A673 (cell line): ENCODE measurements at regions of chr1 and their contacts with region 1.

Region 1: DNA sequence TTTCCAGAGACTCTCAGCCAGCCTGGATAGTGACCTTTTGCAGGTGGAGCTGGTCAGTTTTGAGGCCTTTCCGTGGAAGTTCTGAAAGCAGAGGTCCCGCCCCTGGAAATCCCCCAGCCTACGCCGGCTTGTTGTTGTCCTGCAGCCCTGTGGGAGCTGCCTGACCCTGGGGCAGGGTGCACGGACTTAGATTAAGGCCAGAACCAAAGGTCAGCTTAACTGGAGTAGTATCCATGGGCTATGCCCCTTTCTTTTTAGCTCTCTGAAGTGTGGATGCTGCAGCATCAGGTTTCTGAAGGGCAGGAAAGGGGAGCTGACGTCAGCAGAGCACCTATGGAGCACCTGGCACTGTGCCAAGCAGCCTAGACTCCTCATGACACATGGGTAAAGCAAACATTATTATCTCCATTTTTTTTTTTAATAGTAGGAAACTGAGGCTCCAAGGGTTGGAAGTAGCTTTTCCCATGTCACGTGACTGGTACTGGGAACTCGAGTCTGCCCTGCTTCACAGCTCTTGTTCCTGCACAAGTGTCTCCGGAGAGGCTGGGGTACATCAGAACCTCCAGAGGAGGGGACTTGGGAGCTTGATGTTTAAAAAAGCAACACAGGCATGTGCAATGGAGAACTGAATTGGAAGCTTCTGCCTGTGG is 38.6 kb downstream of the IER5 start:
- DNase-seq: peak; percentile 57
- H3K4me3 ChIP-seq: no peak overlapping the region
- H3K27ac ChIP-seq: no peak overlapping the region
- H3K4me1 ChIP-seq: peaks cover 28% of the 10 kb centered on the region
- H3K27me3 ChIP-seq: no peaks in the 10 kb centered on the region
- CTCF ChIP-seq: no peak

Region 2: GRCh38 chr1:181105134-181106021 is 21.7 kb before region 1 on chr1:
- CTCF ChIA-PET with region 1: no interaction called
- POLR2A ChIA-PET with region 1: interaction called, 11 read pairs
- intact Hi-C with region 1: no loop called
- DNase-seq: peak; percentile 97
- H3K4me3 ChIP-seq: peak overlapping the region; percentile 70
- H3K27ac ChIP-seq: peak overlapping the region; percentile 93
- H3K4me1 ChIP-seq: peaks cover 59% of the 10 kb centered on the region
- H3K27me3 ChIP-seq: no peaks in the 10 kb centered on the region
- CTCF ChIP-seq: no peak